Psoas muscle (tissue), 8 donors: ENCODE measurements at regions of chr5 and their contacts with region 1.

Region 1: DNA sequence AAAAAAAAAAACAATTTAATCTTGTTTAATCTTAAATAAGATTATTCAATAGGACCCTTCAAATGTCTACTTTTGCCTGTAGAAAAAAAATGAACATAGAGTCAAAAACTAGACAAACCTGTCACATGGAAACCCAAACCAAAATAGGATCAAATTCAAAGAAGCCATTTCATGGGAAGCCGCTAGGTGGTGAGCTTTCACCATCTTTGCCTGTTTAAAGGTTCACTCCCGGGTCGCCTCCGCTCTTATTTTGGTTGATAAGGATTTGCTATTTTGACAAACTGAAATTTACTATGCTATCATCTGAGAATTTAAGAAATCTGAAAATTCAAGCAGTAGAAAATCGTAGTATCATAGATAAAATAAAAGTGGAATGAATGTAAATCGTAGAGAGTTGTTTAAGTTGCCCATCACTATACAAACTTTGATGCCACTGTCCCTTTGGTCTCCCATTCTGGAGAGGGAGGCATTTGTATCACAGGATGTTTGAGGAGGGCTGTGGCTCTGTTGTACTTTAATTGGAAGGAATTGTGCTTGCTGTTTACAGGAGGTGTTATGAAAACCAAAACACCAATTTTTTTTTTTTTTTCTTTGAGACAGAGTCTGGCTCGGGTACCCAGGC is 43.5 kb upstream of the DNAH5 start:
- DNase-seq: no peak
- ATAC-seq: peak; percentile 51 to 87 (median 72)
- H3K4me3 ChIP-seq: no peak overlapping the region
- H3K27ac ChIP-seq: no peak overlapping the region
- H3K4me1 ChIP-seq: no peaks in the 10 kb centered on the region
- H3K27me3 ChIP-seq: peaks cover 0 to 6% (median 2%) of the 10 kb centered on the region in 3 donors
- CTCF ChIP-seq: peak; percentile 94

Region 2: DNA sequence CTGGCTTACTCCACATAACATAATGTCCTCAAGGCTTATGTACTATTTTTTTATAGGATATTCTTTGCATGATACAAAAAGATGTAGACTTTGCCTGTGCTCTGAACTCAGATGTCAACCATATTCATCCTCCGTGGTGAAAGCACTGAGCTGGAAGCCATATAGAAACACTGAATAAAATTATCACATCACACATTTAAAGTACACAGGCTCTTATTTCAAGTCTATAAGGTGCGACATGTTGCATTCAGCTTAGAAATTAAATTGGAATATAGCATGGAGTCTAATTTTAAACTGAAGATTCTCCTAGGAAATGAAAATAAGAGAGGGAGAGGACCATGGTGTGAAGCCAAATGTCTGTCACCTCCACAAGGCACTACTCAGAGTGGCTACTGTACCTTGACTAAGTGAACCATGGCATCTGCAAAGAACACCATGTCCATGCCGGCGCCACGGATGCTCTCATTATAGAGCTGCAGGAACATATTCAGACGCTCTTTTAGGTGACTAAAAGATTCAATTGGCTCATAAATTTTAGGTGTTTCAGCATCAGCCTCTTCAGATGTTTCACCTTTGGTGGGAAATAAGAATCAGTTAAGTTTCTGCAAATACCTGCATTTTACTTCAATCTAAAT is 202.1 kb before region 1 on chr5:
- intact Hi-C with region 1: no loop called
- DNase-seq: no peak
- ATAC-seq: no peak
- H3K4me3 ChIP-seq: no peak overlapping the region
- H3K27ac ChIP-seq: no peak overlapping the region
- H3K4me1 ChIP-seq: no peaks in the 10 kb centered on the region
- H3K27me3 ChIP-seq: no peaks in the 10 kb centered on the region
- CTCF ChIP-seq: no peak

Region 3: GRCh38 chr5:14108170-14108996 is 120.4 kb after region 1 on chr5:
- intact Hi-C with region 1: loop called in 1 of 2 experiments (anchors 10 kb)
- DNase-seq: peak; percentile 29 to 62
- ATAC-seq: peak; percentile 85 to 98 (median 90)
- H3K4me3 ChIP-seq: peak overlapping the region; percentile 42
- H3K27ac ChIP-seq: no peak overlapping the region
- H3K4me1 ChIP-seq: no peaks in the 10 kb centered on the region
- H3K27me3 ChIP-seq: no peaks in the 10 kb centered on the region
- CTCF ChIP-seq: peak; percentile 75

Region 4: GRCh38 chr5:14270209-14270702 is 282.3 kb after region 1 on chr5:
- intact Hi-C with region 1: loop called (anchors 5 kb)
- DNase-seq: peak; percentile 48 to 80
- ATAC-seq: peak; percentile 83 to 95 (median 90)
- H3K4me3 ChIP-seq: no peak overlapping the region
- H3K27ac ChIP-seq: peak overlapping the region; percentile 86
- H3K4me1 ChIP-seq: peaks cover 55% of the 10 kb centered on the region
- H3K27me3 ChIP-seq: no peaks in the 10 kb centered on the region
- CTCF ChIP-seq: peak; percentile 85

Region 5: DNA sequence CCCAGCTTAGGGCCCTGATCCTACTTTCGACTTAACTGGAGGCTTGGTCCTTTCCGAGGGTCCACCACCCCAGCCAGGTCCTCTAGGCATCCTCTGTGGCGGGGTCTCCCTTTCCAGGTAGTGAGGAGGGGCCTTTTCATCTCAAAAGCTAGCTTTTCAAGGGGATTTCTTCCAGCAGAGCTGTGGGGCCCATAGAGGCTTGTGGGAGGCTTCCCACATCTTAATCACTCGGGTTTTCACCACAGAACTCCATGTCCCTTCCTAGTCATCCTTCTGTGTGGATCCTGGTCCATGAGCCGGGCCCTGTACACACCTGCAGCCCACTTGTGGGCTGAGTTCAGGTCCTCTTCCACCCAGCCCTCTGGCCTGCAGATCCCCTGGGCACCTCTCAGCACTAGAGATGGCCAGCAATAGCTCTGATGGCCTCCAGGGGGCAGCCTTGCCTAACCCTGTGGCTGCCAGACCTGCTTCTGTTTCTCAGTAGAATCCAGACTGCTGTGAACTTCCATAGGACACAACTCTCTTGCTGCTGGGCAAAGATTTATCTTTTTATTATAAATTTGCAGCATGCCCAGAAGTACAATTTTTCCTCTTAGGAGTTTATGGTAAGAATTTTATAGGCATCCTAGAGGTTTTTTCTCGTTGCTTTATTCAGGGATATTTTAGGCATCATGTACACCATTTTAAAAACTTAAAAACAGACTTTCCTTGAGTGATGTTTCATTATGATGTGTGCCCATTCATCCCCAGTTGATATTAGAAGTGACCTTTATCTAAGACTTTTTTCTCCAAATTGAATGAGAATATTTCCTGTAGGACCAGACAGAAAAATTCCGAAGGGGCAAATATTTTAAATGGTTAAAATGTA is 364.1 kb after region 1 on chr5:
- intact Hi-C with region 1: loop called (anchors 5 to 10 kb)
- DNase-seq: peak; percentile 65 to 75
- ATAC-seq: peak; percentile 84 to 96 (median 92)
- H3K4me3 ChIP-seq: no peak overlapping the region
- H3K27ac ChIP-seq: no peak overlapping the region
- H3K4me1 ChIP-seq: peaks cover 9% of the 10 kb centered on the region
- H3K27me3 ChIP-seq: no peaks in the 10 kb centered on the region
- CTCF ChIP-seq: peak; percentile 92

Region 6: DNA sequence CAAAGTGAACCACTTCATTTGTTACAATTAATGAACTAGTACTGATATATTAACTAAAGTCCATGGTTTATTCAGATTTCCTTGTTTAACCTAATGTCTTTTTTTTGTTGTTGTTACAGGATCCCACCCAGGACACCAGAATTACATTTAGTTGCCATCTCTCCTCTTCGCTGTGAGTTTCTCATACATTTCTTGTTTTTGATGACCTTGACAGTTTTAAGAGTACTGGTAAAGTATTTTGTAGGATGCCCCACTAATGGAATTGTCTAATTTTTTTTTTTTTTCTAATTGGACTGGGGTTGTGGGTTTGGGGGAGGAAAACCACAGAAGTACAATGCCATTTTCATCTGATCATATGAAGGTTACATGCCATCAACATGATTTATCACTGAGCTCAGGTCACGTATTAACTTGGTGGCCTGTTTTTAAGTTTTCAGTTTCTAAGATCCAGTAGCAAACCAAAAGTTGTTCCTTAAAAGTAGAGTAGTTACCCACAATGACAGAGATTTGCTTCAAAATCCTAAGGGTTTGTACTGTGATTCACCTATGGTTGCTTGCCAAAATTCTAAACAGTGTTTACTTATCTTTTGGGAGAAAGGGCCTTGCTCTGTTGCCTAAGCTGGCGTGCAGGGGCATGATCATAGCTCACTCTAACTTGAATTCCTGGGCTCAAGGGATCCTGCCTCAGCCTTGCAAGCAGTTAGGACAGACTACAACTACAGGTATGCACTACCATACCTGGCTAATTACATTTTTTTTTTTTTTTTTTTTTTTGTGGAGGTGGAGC is 672.1 kb after region 1 on chr5:
- intact Hi-C with region 1: loop called in 1 of 2 experiments (anchors 10 kb)
- DNase-seq: no peak
- ATAC-seq: no peak
- H3K4me3 ChIP-seq: no peak overlapping the region
- H3K27ac ChIP-seq: no peak overlapping the region
- H3K4me1 ChIP-seq: no peaks in the 10 kb centered on the region
- H3K27me3 ChIP-seq: no peaks in the 10 kb centered on the region
- CTCF ChIP-seq: no peak